A549 (cell line): ENCODE measurements at regions of chr2 and their contacts with region 1.

Region 1: GRCh38 chr2:26144953-26145680 is 27.8 kb upstream of the GAREM2 start:
- DNase-seq: peak; percentile 77 to 79
- ATAC-seq: peak; percentile 57 to 61; a peak in 5 of 6 replicates
- H3K4me3 ChIP-seq: no peak overlapping the region
- H3K27ac ChIP-seq: peak overlapping the region; percentile 64 to 76
- H3K4me1 ChIP-seq: peaks cover 25% of the 10 kb centered on the region
- CTCF ChIP-seq: peak; percentile 98
- EP300 ChIP-seq: no peak
- POLR2A ChIP-seq: no peak
- RAD21 ChIP-seq: peak; percentile 98 to 99

Region 2: GRCh38 chr2:25917832-25918231 is 227.3 kb before region 1 on chr2:
- CTCF ChIA-PET with region 1: no interaction called
- POLR2A ChIA-PET with region 1: no interaction called
- DNase-seq: no peak
- ATAC-seq: no peak
- H3K4me3 ChIP-seq: no peak overlapping the region
- H3K27ac ChIP-seq: no peak overlapping the region
- H3K4me1 ChIP-seq: peaks cover 11% of the 10 kb centered on the region; the same call in 2 of the 3 replicates
- CTCF ChIP-seq: no peak
- EP300 ChIP-seq: no peak
- POLR2A ChIP-seq: no peak
- RAD21 ChIP-seq: no peak

Region 3: DNA sequence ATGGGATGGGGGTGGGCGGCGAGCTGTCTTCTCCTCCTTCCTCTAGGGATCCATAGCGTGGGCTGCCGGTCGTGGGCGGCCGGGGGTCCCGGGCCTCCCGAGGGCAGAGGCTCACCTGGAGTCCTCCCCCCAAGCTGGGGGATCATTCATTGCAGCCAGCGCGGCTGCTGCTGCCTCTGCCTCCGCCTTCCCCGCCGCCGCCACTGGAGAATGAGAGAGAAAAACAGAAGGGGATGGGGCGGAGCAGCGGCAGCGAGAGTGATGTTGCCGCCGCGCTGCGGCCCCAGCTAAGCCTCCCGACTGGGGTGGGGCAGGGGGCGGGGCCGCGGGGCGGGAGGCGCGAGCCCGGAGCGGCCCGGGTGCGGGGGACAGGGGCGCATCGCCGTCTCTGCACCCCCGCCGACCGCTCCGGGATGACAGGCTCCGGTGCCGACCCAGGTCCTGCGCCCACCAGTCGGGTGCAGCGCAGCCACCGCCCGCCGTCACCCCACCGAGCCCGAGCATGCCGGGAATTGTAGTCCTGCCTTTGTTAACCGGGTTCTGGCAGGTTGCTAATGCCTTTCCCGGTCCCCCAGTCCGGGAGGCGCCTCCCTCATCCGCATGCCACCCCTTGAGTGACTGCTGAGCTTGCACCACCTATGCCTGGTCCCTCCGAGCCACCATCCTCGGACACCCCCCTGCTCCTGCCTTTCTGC is 162.7 kb before region 1 on chr2 and contains the start of gene KIF3C:
- CTCF ChIA-PET with region 1: interaction called, 240 read pairs
- POLR2A ChIA-PET with region 1: no interaction called
- DNase-seq: peak; percentile 75 to 82
- ATAC-seq: peak; percentile 79
- H3K4me3 ChIP-seq: peak within 1 kb of the TSS; percentile 79
- H3K27ac ChIP-seq: peak within 1 kb of the TSS; percentile 81 to 90
- H3K4me1 ChIP-seq: peaks cover 50% of the 10 kb centered on the region
- CTCF ChIP-seq: no peak
- EP300 ChIP-seq: no peak
- POLR2A ChIP-seq: no peak; the same call in 1 of the 2 replicates
- RAD21 ChIP-seq: no peak; a peak in 1 of 5 replicates
- polyA plus RNA-seq, gene KIF3C: 17.1 and 20.1 TPM in 2 replicates

Region 4: DNA sequence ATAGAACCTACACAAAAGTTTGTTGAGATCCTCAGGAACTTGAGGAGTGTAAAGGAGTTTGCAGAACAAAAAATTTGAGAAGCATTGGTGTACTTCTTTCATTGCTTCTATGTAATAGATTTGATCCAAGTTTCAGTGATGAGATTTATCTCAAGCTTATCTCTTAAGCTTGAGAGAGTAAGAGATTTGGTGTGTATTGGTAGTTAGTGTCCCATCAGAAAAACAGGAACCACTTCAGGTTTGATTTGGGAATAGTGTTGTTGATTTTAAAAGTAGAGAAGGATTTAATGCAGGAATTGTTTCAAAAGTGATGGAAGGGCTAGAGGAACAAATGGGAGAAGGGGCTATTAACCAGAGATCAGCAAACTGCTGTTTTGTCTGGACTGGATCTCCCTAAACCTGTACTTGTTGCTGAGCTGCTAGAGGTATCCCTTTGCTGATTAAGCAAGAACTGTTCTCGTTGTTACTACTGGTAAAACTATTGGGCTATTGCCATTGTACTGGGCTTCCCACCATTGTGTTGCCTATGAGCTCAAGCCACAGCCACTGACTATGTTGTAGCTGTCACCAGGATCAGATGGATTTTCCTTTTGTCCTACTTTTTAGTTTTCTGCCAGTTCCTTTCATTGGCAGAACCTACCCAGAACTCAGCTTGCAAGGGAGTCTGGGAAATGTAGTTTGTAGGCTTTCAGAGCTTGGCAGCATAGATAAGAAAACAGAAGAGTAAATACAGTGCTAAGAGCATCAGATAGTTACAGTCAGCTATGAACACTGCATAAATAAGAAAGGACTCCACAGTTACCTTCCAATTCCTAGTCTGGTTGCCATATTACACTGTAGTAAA is 72.0 kb before region 1 on chr2:
- CTCF ChIA-PET with region 1: interaction called, 11 read pairs
- POLR2A ChIA-PET with region 1: no interaction called
- DNase-seq: peak in 1 of 2 experiments; percentile 45
- ATAC-seq: peak; percentile 26 to 51; a peak in 3 of 6 replicates
- H3K4me3 ChIP-seq: no peak overlapping the region
- H3K27ac ChIP-seq: peak overlapping the region in 1 of 2 experiments; percentile 21; a peak in 3 of 6 replicates
- H3K4me1 ChIP-seq: peaks cover 97% of the 10 kb centered on the region
- CTCF ChIP-seq: no peak
- EP300 ChIP-seq: no peak
- POLR2A ChIP-seq: no peak
- RAD21 ChIP-seq: no peak

Region 5: GRCh38 chr2:26112201-26112600 is 32.9 kb before region 1 on chr2:
- CTCF ChIA-PET with region 1: interaction called, 13 read pairs
- POLR2A ChIA-PET with region 1: no interaction called
- DNase-seq: no peak
- ATAC-seq: no peak
- H3K4me3 ChIP-seq: no peak overlapping the region
- H3K27ac ChIP-seq: no peak overlapping the region
- H3K4me1 ChIP-seq: peaks cover 19% of the 10 kb centered on the region; the same call in 2 of the 3 replicates
- CTCF ChIP-seq: no peak
- EP300 ChIP-seq: no peak
- POLR2A ChIP-seq: no peak
- RAD21 ChIP-seq: no peak

Region 6: GRCh38 chr2:26157580-26157979 is 12.5 kb after region 1 on chr2:
- CTCF ChIA-PET with region 1: interaction called, 12 read pairs
- POLR2A ChIA-PET with region 1: no interaction called
- DNase-seq: no peak
- ATAC-seq: no peak
- H3K4me3 ChIP-seq: no peak overlapping the region
- H3K27ac ChIP-seq: no peak overlapping the region
- H3K4me1 ChIP-seq: no peaks in the 10 kb centered on the region
- CTCF ChIP-seq: no peak
- EP300 ChIP-seq: no peak
- POLR2A ChIP-seq: no peak
- RAD21 ChIP-seq: no peak